ENCODE measurements at regions of chr12 and their contacts with region 1.

Region 1: GRCh38 chr12:89768586-89769486 is 60.2 kb upstream of the ATP2B1 start:
- DNase-seq: peak; percentile 65
- ATAC-seq: peak; percentile 87
- H3K4me3 Mint-ChIP-seq: no peak overlapping the region
- H3K27ac Mint-ChIP-seq: peak overlapping the region; percentile 66
- H3K4me1 Mint-ChIP-seq: peaks cover 45% of the 10 kb centered on the region
- H3K27me3 Mint-ChIP-seq: no peaks in the 10 kb centered on the region
- CTCF ChIP-seq: no peak

Region 2: GRCh38 chr12:89731614-89732013 is 37.2 kb before region 1 on chr12:
- CTCF ChIA-PET with region 1: no interaction called
- POLR2A ChIA-PET with region 1: no interaction called
- intact Hi-C with region 1: no loop called
- DNase-seq: no peak
- ATAC-seq: no peak
- H3K4me3 Mint-ChIP-seq: no peak overlapping the region
- H3K27ac Mint-ChIP-seq: no peak overlapping the region
- H3K4me1 Mint-ChIP-seq: peaks cover 9% of the 10 kb centered on the region
- H3K27me3 Mint-ChIP-seq: no peaks in the 10 kb centered on the region
- CTCF ChIP-seq: no peak

Region 3: GRCh38 chr12:89856431-89856830 is 87.6 kb after region 1 on chr12:
- CTCF ChIA-PET with region 1: no interaction called
- POLR2A ChIA-PET with region 1: no interaction called
- intact Hi-C with region 1: loop called (anchors 10 kb)
- DNase-seq: peak; percentile 13
- ATAC-seq: peak; percentile 93
- H3K4me3 Mint-ChIP-seq: no peak overlapping the region
- H3K27ac Mint-ChIP-seq: peak overlapping the region; percentile 58
- H3K4me1 Mint-ChIP-seq: peaks cover 48% of the 10 kb centered on the region
- H3K27me3 Mint-ChIP-seq: no peaks in the 10 kb centered on the region
- CTCF ChIP-seq: no peak

Region 4: DNA sequence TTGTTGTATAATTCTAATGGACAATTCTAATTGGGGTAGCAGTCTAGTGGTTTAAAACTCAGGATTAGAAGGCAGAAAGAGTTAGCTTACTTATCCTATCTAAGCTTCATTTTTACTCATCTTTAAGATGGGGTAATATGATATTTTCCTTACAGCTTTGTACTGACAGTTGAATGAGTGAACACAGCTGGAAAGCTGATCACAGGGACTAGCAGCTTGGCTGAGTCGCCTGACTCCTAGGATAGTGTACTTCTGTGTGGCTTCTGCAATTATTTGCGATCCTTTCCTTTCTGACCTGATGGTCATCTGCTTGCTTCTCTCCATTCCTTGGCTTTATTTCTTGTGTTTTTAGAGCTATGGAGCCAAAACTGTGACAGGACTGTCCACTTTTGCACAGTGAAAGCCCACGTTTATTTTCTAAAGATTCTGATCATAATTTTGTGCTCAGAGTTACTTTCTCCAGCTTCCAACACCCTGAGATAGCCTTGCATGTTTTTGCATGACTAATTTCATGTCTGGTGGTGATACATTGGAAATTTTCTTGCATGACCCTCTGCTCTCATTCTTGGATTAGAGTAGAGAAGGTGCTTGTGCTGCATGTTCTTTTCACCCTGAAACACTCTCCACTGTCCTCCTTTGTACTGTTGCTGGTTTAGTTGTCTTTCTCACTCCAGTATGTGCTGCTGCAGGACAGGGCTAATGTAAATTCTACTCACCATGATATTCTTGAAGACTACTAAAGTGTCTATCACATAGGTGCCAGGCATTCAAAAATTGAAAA is 316.8 kb after region 1 on chr12:
- CTCF ChIA-PET with region 1: no interaction called
- POLR2A ChIA-PET with region 1: no interaction called
- intact Hi-C with region 1: loop called (anchors 10 kb)
- DNase-seq: no peak
- ATAC-seq: peak; percentile 53
- H3K4me3 Mint-ChIP-seq: no peak overlapping the region
- H3K27ac Mint-ChIP-seq: no peak overlapping the region
- H3K4me1 Mint-ChIP-seq: peaks cover 14% of the 10 kb centered on the region
- H3K27me3 Mint-ChIP-seq: no peaks in the 10 kb centered on the region
- CTCF ChIP-seq: no peak